CD4-positive, alpha-beta memory T cell (primary cell): ENCODE measurements at regions of chr11 and their contacts with region 1.

Region 1: DNA sequence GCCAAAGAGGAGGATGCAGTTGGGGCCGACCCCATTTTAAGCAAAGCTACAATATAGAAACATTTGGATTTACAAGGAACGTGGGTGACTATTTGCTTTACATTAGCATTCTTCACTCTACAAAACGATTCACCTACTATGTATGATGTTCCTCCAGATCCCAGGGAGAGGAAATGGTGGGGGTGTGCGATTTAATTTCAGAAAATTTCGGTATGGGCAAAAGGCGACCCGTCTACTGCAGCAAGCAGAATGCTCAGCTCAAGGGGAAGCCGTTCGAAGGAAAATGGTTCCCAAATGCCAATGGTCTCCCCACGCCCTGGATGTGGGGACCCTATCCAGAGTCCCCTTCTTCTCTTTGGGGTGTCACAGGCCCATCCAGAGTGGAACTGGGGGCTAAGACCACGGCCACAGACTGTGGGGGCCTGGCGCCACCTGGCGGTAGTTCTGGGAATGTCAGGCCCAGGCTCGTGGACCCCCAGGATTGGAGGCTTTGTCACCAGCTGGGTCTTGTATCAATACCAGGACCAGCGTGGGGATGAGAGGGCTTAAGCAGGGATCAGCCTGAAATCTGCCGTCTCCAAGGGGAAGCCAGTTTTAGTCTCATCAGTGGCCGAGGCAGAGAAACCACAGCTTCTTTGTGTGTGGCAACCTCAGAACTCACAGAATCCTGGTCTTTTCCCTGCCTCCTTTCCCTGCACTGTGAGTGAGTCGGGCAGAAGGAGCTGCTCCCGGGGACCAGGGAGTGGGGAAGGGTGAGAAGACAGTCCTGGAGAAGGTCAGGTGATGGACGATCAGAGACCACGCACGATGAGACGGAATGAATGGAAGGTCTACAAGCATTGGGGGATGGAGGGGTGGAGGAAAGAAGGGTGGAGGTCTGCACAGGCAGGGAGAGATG is 8.4 kb downstream of the LRRC10B start:
- DNase-seq: peak in 4 of 5 donors; percentile 37 to 48 (median 41)
- H3K4me3 ChIP-seq: no peak overlapping the region
- H3K4me3 Mint-ChIP-seq: peak overlapping the region in 5 of 8 donors; percentile 12 to 77 (median 57)
- H3K27ac ChIP-seq: no peak overlapping the region
- H3K27ac Mint-ChIP-seq: peak overlapping the region in 1 of 7 donors; percentile 46
- H3K4me1 ChIP-seq: peaks cover 11% of the 10 kb centered on the region
- H3K4me1 Mint-ChIP-seq: peaks cover 2 to 8% (median 7%) of the 10 kb centered on the region in 4 donors
- H3K27me3 ChIP-seq: no peaks in the 10 kb centered on the region
- H3K27me3 Mint-ChIP-seq: peaks cover 4 to 23% of the 10 kb centered on the region in 2 donors

Region 2: DNA sequence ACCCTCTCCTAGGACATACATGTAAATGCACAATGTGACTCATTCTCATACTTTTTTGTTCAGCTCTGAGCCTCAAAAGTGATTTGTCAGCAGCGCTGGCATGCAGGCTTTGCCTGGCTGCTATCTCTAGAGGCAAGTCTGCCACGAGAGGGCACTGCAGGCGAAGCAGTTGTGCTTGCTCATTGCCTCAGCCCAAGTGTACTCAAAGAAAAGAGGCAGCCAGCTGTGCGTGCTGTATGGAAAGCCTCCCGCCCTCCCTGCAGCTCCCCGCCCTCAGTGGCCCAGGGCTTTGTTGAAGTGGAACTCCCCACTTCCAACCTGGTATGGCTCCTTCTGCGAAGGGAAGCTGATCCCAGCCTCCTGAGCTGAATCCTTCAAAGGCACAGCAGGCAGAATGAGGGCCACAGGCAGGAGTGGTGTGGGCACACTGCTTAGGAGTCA is 70.7 kb before region 1 on chr11:
- CTCF ChIA-PET with region 1: interaction called, 12 read pairs
- POLR2A ChIA-PET with region 1: no interaction called
- intact Hi-C with region 1: no loop called
- DNase-seq: peak; percentile 33 to 68 (median 50)
- H3K4me3 ChIP-seq: no peak overlapping the region
- H3K4me3 Mint-ChIP-seq: no peak overlapping the region
- H3K27ac ChIP-seq: no peak overlapping the region
- H3K27ac Mint-ChIP-seq: peak overlapping the region in 2 of 7 donors; percentile 61 to 70
- H3K4me1 ChIP-seq: no peaks in the 10 kb centered on the region
- H3K4me1 Mint-ChIP-seq: peaks cover 11 to 18% (median 13%) of the 10 kb centered on the region in 4 donors
- H3K27me3 ChIP-seq: no peaks in the 10 kb centered on the region
- H3K27me3 Mint-ChIP-seq: no peaks in the 10 kb centered on the region

Region 3: GRCh38 chr11:61477727-61478148 is 39.2 kb before region 1 on chr11:
- CTCF ChIA-PET with region 1: interaction called, 43 read pairs
- POLR2A ChIA-PET with region 1: no interaction called
- intact Hi-C with region 1: loop called (anchors 1 kb)
- DNase-seq: peak in 4 of 5 donors; percentile 25 to 48 (median 34)
- H3K4me3 ChIP-seq: no peak overlapping the region
- H3K4me3 Mint-ChIP-seq: no peak overlapping the region
- H3K27ac ChIP-seq: no peak overlapping the region
- H3K27ac Mint-ChIP-seq: no peak overlapping the region
- H3K4me1 ChIP-seq: peaks cover 8% of the 10 kb centered on the region
- H3K4me1 Mint-ChIP-seq: peaks cover 4 to 17% (median 8%) of the 10 kb centered on the region in 4 donors
- H3K27me3 ChIP-seq: no peaks in the 10 kb centered on the region
- H3K27me3 Mint-ChIP-seq: peaks cover 3 to 5% of the 10 kb centered on the region in 2 donors

Region 4: DNA sequence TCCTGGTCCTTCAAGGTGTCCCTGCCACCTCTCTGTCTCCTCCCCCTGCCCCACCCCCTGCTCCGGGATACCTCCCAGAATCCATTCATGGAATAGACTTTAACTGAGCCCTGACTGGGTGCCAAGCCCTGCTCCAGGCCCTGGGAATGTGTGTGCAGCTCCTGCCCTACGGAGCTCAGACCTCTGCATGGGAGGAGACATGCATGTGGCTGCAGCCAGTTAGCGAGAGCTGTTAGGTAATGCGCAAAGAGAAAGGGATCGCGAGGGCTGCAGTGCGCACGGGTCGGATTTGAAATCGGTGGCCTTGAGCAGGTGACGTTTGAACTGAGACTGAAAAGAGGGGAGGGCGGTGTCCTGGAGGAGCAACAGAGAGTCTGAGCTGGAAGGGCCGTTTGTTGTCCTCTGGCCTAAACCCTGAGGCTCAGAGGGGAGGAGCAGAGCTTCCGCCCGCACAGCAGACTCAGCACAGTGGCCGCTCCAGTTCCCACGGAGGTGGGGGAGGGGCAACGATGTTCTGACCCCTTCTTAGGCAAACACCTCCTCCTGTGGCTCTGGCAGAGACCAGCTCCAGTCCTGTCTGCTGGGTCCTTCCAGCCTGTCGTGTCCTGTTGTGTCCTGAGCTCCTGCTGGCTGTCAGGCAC is 28.2 kb before region 1 on chr11:
- CTCF ChIA-PET with region 1: interaction called, 14 read pairs
- POLR2A ChIA-PET with region 1: no interaction called
- intact Hi-C with region 1: no loop called
- DNase-seq: no peak
- H3K4me3 ChIP-seq: no peak overlapping the region
- H3K4me3 Mint-ChIP-seq: no peak overlapping the region
- H3K27ac ChIP-seq: no peak overlapping the region
- H3K27ac Mint-ChIP-seq: no peak overlapping the region
- H3K4me1 ChIP-seq: no peaks in the 10 kb centered on the region
- H3K4me1 Mint-ChIP-seq: no peaks in the 10 kb centered on the region
- H3K27me3 ChIP-seq: no peaks in the 10 kb centered on the region
- H3K27me3 Mint-ChIP-seq: peaks cover 0 to 3% of the 10 kb centered on the region in 2 donors

Region 5: DNA sequence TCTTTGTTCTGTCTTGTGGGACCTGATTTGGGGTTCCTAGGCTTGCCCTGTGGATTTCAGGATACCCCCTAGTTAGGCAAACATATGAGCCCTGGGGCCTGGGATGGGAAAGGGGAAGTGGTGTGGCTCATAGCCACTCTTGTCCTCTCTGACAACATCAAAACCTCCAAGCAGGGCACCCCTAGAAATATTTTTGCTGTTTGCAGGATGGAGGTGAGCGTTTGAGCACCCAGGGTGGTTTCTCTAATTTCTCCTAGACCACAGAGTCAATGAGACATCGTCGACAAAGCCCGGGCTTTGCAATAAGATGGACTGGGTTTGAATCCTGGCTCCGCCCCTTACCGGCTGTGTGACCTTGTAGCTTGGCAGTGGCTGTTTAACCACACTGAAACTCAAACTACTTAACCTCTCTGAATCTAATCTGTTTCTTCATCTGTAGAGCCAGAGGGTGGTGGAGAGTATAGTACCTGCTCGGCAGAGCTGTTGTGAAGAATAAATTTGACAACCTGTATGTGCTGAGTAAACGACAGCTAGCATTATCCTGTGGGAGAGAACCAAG is 13.6 kb before region 1 on chr11:
- CTCF ChIA-PET with region 1: interaction called, 11 read pairs
- POLR2A ChIA-PET with region 1: no interaction called
- intact Hi-C with region 1: no loop called
- DNase-seq: no peak
- H3K4me3 ChIP-seq: no peak overlapping the region
- H3K4me3 Mint-ChIP-seq: no peak overlapping the region
- H3K27ac ChIP-seq: no peak overlapping the region
- H3K27ac Mint-ChIP-seq: no peak overlapping the region
- H3K4me1 ChIP-seq: peaks cover 8% of the 10 kb centered on the region
- H3K4me1 Mint-ChIP-seq: peaks cover 3 to 7% (median 5%) of the 10 kb centered on the region in 4 donors
- H3K27me3 ChIP-seq: peaks cover 16% of the 10 kb centered on the region
- H3K27me3 Mint-ChIP-seq: peaks cover 20 to 25% of the 10 kb centered on the region in 2 donors

Region 6: DNA sequence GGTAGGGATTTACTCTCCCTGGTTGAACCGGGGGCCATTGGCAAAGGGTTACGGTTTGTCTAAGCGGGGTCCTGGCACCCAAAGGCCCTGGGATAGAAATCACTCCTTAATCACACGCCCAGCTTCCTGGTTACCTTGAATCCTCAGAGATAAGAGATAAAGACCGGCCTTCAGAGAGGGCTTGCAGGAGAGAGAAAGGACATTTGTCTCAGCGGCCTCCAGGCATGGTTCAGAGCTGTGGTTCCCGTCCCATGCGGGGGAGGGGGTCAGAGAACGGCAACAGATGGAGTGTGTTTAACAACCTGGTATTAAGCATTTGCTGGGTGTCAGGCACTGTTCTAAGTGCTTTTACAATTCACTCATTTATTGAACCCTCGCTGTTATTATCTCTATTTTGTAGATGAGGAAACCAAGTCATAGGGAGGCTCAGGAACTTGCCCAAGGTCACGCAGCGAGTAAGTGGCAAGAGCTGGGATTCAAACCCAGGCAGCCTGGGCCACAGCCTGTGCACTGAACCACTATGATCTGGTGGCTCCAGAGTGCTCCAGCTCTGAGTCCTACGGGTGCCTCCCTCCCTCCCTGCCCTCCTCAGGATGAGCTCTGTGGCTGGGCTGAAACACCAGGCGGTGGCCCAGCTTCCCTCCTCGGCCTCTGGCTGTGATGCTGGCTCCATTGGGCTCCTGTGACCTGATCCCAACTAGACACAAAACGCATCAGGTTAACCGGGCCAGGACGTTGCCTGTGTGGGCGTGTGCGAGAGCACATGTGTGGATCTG is 10.2 kb after region 1 on chr11:
- CTCF ChIA-PET with region 1: interaction called, 10 read pairs
- POLR2A ChIA-PET with region 1: no interaction called
- intact Hi-C with region 1: no loop called
- DNase-seq: no peak
- H3K4me3 ChIP-seq: no peak overlapping the region
- H3K4me3 Mint-ChIP-seq: no peak overlapping the region
- H3K27ac ChIP-seq: no peak overlapping the region
- H3K27ac Mint-ChIP-seq: peak overlapping the region in 2 of 7 donors; percentile 11 to 16
- H3K4me1 ChIP-seq: no peaks in the 10 kb centered on the region
- H3K4me1 Mint-ChIP-seq: no peaks in the 10 kb centered on the region
- H3K27me3 ChIP-seq: no peaks in the 10 kb centered on the region
- H3K27me3 Mint-ChIP-seq: peaks cover 13 to 36% of the 10 kb centered on the region in 2 donors

Region 7: GRCh38 chr11:61764606-61765260 is 247.8 kb after region 1 on chr11:
- CTCF ChIA-PET with region 1: no interaction called
- POLR2A ChIA-PET with region 1: no interaction called
- intact Hi-C with region 1: no loop called
- DNase-seq: no peak
- H3K4me3 ChIP-seq: no peak overlapping the region
- H3K4me3 Mint-ChIP-seq: no peak overlapping the region
- H3K27ac ChIP-seq: no peak overlapping the region
- H3K27ac Mint-ChIP-seq: no peak overlapping the region
- H3K4me1 ChIP-seq: no peaks in the 10 kb centered on the region
- H3K4me1 Mint-ChIP-seq: no peaks in the 10 kb centered on the region
- H3K27me3 ChIP-seq: no peaks in the 10 kb centered on the region
- H3K27me3 Mint-ChIP-seq: peaks cover 2 to 5% of the 10 kb centered on the region in 2 donors